Activated T-helper 1 cell treated with anti-CD3 and anti-CD28 coated beads, Interleukin-12 subunit alpha, Interleukin-12 subunit beta, Interleukin-2, Interleukin-4 antibody, amounts not matched to agents 30 ng/mL and 10 ng/mL and 1 ng/mL, durations not matched to agents 14 hours and 24 hours and 36 hours (primary cell): ENCODE measurements at regions of chr2 and their contacts with region 1.

Region 1: DNA sequence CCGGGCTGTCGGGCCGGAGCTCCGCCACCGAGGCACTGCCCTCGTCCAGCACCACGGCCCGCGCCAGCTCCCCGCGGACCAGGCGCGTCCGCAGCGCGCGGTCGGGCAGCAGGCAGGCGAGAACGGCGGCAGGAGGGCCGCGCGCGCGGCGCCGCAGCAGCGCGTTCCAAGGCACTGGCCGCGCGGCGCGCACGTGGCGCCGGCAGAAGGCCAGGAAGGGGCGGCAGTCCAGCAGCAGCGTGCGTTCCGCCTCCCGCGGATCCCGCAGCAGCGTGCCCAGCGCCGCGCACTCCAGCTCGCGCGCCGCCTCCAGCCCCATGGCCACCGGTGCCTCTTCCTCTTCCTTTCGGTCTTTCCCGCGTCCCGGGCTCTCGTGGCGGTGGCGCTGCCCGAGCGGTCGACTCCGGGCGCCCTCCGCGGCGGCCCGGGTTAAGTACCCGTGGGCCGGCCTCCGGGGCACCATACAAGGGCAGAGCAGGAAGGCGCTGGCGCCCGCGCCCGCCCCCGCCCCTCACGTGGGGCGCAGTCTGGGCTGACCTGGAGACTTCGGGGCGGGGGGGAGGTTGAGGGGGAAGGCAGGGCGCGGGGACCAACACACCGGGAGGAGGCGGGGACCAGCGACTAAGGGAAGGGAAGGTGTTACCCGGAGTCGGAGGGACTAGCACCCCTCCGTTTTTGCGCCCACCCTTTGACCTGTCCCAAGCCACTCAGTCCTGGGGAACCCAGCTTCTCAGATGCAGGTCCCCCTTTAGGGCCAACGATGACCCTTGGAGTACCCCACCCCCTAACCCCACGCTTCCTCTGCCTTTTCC is at the start of gene DUSP2:
- DNase-seq: peak; percentile 88
- H3K4me3 Mint-ChIP-seq: peak within 1 kb of the TSS; percentile 97
- H3K27ac Mint-ChIP-seq: peak within 1 kb of the TSS; percentile 99
- H3K4me1 Mint-ChIP-seq: peaks cover 55% of the 10 kb centered on the region
- H3K27me3 Mint-ChIP-seq: peaks cover 2% of the 10 kb centered on the region
- total RNA-seq, gene DUSP2: 494 and 500 TPM in 2 replicates

Region 2: DNA sequence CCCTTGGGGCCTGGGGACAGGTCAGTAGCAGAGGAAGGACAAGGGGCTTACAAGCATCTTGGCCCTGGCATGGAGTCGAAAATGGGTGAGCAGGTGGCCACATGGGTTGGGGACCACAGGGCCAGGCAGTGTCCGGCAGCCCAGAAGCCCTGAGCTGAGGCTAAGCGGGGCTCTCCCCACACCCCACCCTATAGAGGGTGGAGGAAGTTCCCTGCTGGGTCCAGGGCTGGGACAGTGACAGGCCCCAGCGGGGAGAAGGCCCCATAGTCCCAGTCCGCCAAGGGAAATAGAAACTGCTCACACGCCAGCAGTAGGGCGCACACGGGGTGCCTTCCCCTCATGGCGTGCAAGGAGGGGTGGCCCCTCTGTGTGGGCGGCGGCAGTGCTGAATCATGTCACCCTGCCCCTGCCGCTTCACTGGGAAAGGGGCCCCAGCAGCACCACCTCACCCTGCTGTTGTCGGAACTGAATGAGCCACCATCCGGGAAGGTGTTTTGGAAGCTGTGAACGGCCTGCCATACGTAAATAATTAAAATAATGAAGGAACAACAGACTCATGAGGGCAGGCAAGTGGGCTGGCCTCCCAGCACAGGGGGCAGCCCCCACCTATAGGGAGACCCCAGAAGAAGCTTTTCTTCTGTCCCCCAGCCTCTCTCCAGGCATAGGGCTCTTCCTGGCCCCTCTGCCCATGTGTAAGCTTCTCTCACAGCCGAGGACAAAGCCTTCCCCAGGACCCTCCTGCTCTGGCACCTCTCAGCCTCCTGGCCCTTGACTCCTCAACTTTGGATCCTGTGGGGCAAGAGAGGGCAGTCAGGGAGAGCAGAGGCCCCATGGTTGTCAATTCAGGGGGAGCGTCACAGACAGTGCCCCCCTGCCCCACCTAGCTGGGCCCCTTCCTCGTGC is 12.7 kb after region 1 on chr2:
- intact Hi-C with region 1: loop called (anchors 1 kb)
- DNase-seq: peak; percentile 74
- H3K4me3 Mint-ChIP-seq: peak overlapping the region; percentile 65
- H3K27ac Mint-ChIP-seq: peak overlapping the region; percentile 87
- H3K4me1 Mint-ChIP-seq: peaks cover 74% of the 10 kb centered on the region
- H3K27me3 Mint-ChIP-seq: no peaks in the 10 kb centered on the region

Region 3: DNA sequence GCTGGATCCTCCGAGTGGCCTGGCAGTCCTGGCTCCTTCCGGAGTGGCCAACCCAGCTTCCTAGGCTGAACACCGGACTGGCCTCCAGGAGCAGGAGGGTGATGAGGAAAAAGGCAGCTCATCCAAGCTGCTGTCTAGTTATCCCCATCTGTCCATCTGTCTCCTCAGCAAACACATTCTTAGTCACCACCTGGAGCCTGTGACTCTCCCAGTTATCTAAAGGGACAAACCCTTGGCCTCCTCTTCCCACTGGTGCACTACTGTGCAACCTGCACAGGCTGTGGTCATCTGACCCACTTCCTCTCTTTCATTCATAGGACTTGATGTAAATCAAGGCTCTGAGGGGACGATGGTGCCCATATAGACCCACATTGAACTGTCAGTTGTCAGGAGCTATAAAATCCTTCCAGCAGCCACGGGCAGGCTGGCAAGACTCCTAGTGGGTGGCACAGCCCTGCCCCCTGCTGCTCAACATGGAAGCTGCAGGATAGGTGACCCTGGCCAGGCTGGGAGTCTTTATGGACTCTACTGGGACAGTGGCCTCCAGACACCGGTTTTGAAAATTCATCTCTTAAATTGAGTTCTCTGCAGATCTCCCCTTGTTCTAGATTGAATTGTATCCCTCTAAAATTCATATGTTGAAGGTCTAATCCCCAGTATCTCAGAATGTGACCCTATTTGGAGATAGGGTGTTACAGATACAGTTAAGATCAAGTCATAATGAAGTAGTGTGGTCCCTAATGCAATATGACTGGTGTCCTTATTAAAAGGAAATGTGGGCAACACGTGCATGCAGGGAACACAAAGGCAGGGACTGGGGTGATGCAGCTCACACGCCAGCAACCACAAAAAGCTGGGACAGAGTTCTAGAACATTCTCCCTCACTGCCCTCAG is 29.3 kb after region 1 on chr2:
- intact Hi-C with region 1: loop called (anchors 1 kb)
- DNase-seq: peak; percentile 73
- H3K4me3 Mint-ChIP-seq: peak overlapping the region; percentile 59
- H3K27ac Mint-ChIP-seq: peak overlapping the region; percentile 69
- H3K4me1 Mint-ChIP-seq: peaks cover 15% of the 10 kb centered on the region
- H3K27me3 Mint-ChIP-seq: no peaks in the 10 kb centered on the region

Region 4: DNA sequence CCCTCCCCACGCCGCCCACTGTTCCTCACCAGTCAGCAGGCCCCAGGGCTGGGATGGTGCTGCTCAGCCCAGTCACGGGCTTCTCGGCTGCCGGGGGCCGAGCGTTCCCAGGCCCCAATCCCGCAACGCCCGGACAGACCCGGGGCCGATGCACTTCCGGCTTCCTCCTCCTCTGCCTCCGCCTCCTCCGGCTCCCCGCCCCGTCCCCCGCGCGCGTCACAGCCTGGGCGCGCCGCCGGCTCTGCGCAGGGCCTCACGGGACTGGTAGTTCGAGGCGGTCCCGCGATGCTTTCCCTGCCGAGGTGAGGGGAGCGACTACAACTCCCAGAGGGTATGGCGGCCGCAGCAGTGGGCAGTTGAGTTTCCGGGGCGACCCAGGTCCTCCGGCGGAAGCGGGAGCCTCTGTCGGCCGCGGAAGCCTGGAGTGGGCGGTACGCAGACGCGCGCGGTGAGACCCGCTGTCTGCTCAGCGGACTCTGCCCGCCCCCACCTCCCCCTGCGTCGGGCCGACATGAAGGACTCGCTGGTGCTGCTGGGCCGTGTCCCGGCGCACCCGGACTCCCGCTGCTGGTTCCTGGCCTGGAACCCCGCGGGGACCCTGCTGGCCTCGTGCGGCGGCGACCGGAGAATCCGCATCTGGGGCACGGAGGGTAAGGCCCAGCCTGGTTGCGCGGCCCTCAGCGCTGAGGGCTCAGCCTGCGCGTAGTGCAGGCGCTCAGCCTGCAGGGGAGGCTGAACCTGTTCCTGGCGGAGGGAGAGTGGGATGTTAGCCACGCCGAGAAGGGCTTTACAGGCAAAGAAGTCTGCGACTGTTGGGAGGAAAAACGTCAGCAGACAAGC is 120.8 kb after region 1 on chr2 and contains the starts of genes CIAO1 and TMEM127:
- intact Hi-C with region 1: loop called (anchors 1 kb)
- DNase-seq: peak; percentile 99
- H3K4me3 Mint-ChIP-seq: peak within 1 kb of the TSS; percentile 96
- H3K27ac Mint-ChIP-seq: peak within 1 kb of the TSS; percentile 94
- H3K4me1 Mint-ChIP-seq: peaks cover 33% of the 10 kb centered on the region
- H3K27me3 Mint-ChIP-seq: no peaks in the 10 kb centered on the region
- total RNA-seq, gene CIAO1: 111 and 115 TPM in 2 replicates
- total RNA-seq, gene TMEM127: 29.7 and 30.1 TPM in 2 replicates

Region 5: DNA sequence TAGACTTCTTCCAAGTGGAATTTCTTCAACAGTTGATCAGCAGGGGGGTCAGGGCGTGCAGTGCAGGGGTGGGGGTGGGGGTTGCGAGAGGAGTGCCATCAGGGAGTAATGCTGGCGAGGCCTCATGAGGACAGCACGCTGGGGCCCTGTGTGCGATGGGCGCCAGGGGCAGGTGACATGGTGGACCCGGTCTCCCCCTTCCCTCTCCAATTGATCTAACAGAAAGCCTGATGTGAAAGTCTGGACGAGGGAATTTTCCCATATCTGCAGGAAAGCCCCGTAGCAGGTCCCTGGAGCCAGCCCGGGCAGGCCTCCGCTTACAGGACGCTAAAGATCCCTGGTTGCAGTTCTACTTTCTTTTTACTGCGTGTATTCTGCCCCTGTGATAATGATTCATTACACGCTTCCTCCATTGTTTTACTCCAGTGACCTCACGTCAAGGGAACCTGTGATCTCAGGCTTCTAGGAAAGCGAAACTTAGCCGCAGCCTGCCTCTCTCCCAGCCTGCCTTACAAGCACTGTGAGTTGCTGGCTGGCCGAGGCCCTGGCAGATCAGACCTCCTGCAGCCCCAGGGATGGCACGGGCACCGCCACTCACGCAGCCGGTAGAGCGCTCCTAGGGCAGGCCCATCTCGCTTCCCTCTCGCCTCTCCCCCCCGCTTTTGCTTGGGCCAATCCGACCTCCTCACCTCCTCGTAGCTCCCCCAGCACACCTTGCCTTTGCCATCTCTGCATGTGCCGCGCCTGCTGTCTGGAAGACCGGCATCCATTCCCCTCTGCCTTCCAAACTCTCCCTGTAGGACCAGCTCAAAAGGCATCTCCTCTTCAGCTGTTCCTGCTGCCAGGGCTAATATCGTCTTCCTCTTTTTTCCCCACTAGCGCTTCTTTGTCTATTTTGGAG is 340.8 kb after region 1 on chr2:
- intact Hi-C with region 1: loop called (anchors 5 kb)
- DNase-seq: peak; percentile 88
- H3K4me3 Mint-ChIP-seq: peak overlapping the region; percentile 92
- H3K27ac Mint-ChIP-seq: peak overlapping the region; percentile 96
- H3K4me1 Mint-ChIP-seq: peaks cover 63% of the 10 kb centered on the region
- H3K27me3 Mint-ChIP-seq: peaks cover 5% of the 10 kb centered on the region

Region 6: DNA sequence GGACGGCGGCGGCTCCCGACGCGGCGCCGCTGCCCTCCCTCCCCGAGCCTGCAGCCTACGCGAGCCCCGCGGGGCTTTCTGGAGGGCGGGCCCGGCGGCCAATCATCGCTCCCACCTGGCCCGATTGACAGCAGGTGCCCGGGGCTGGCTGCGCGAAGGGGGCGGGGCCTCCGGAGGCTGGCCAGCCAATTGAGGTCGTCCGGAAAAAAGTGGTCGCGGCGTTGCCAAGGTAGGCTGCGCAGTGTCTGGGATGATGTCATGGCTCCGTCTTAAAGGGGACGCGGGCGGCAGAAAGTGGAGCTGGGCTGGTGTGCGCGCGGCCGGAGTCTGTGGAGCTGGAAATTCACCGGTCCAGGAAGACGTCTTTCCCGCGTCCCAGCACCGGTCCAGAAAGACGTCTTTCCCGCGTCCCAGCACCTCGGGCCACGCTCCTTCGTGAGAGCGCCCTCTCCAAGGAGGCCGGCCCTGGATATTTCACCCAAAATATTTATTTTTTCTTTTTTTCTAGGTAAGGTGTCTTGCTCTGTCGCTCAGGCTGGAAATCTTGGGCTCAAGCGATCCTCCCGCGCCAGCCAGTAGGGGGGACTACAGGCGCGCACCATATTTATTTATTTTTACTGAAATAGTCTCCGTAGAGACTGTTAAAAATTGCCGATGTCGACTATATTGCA is 1518.9 kb after region 1 on chr2 and contains the start of gene ACTR1B:
- intact Hi-C with region 1: loop called (anchors 10 kb)
- DNase-seq: peak; percentile 98
- H3K4me3 Mint-ChIP-seq: peak within 1 kb of the TSS; percentile 94
- H3K27ac Mint-ChIP-seq: peak within 1 kb of the TSS; percentile 97
- H3K4me1 Mint-ChIP-seq: peaks cover 39% of the 10 kb centered on the region
- H3K27me3 Mint-ChIP-seq: no peaks in the 10 kb centered on the region
- total RNA-seq, gene ACTR1B: 101 and 102 TPM in 2 replicates